PC-9 (cell line): ENCODE measurements at regions of chr3 and their contacts with region 1.

Region 1: GRCh38 chr3:111080413-111080812 is 8.8 kb downstream of the NECTIN3 start:
- DNase-seq: no peak
- H3K4me3 ChIP-seq: no peak overlapping the region
- H3K27ac ChIP-seq: no peak overlapping the region
- H3K4me1 ChIP-seq: no peaks in the 10 kb centered on the region
- H3K27me3 ChIP-seq: no peaks in the 10 kb centered on the region
- CTCF ChIP-seq: peak; percentile 78

Region 2: GRCh38 chr3:109532257-109533216 is 1547.9 kb before region 1 on chr3:
- CTCF ChIA-PET with region 1: interaction called, 5 read pairs
- POLR2A ChIA-PET with region 1: no interaction called
- intact Hi-C with region 1: loop called (anchors 1 kb)
- DNase-seq: peak; percentile 63 to 71
- H3K4me3 ChIP-seq: no peak overlapping the region
- H3K27ac ChIP-seq: no peak overlapping the region
- H3K4me1 ChIP-seq: no peaks in the 10 kb centered on the region
- H3K27me3 ChIP-seq: no peaks in the 10 kb centered on the region
- CTCF ChIP-seq: peak; percentile 75

Region 3: DNA sequence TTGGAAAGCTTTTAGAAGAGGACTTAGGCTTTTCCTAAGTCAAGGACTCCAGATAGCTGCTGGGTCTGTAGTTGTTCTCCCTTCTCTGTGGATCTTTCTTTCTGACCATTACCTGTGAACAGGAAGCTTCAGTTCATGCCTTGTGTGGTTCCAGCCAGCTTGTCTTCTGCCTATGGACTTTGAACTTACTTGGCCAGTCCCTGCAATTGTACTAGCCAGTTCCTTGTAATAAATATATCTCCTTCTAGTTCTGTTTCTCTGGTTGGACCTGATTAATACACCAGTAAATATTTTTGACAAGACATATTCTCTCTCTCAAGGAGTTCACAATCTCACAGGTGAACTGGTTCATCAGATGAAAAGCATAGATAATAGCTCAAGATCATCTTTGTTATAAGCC is 1401.8 kb before region 1 on chr3:
- CTCF ChIA-PET with region 1: interaction called, 10 read pairs
- POLR2A ChIA-PET with region 1: no interaction called
- intact Hi-C with region 1: no loop called
- DNase-seq: no peak
- H3K4me3 ChIP-seq: no peak overlapping the region
- H3K27ac ChIP-seq: no peak overlapping the region
- H3K4me1 ChIP-seq: no peaks in the 10 kb centered on the region
- H3K27me3 ChIP-seq: no peaks in the 10 kb centered on the region
- CTCF ChIP-seq: no peak

Region 4: GRCh38 chr3:109731620-109732473 is 1348.6 kb before region 1 on chr3:
- CTCF ChIA-PET with region 1: no interaction called
- POLR2A ChIA-PET with region 1: no interaction called
- intact Hi-C with region 1: loop called (anchors 2 kb)
- DNase-seq: peak in 1 of 2 experiments; percentile 32
- H3K4me3 ChIP-seq: no peak overlapping the region
- H3K27ac ChIP-seq: no peak overlapping the region
- H3K4me1 ChIP-seq: no peaks in the 10 kb centered on the region
- H3K27me3 ChIP-seq: no peaks in the 10 kb centered on the region
- CTCF ChIP-seq: peak; percentile 100

Region 5: GRCh38 chr3:110495201-110495927 is 585.0 kb before region 1 on chr3:
- CTCF ChIA-PET with region 1: no interaction called
- POLR2A ChIA-PET with region 1: no interaction called
- intact Hi-C with region 1: loop called (anchors 1 kb)
- DNase-seq: peak in 1 of 2 experiments; percentile 60
- H3K4me3 ChIP-seq: no peak overlapping the region
- H3K27ac ChIP-seq: no peak overlapping the region
- H3K4me1 ChIP-seq: no peaks in the 10 kb centered on the region
- H3K27me3 ChIP-seq: no peaks in the 10 kb centered on the region
- CTCF ChIP-seq: no peak

Region 6: DNA sequence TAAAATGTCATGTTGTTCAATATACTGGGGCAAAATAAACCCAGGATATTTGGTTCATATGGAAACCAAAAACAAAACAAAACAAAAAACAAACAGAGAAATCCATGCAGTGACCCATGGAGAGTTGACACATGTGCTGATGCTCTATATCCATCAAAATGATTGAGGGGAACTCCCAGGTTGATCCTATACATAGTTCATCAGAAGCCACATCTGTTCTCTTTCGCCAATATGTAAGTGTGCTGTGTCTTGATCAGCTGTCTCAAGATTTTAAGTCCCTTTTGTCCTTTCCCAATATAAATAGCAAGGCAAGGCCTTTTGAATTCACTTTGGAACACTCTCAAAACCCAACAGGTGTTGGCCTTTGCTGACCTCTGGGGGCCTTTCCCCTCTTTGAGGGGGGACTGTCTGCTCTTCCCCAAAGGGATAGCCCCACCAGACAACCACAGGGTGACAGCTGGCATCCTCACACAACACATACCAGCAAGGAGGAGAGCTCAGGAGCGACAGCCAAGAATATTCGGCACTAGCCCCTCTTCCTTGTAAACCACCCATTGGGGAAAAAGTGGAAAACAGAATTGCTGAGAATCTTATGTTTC is 252.2 kb after region 1 on chr3:
- CTCF ChIA-PET with region 1: interaction called, 15 read pairs
- POLR2A ChIA-PET with region 1: no interaction called
- intact Hi-C with region 1: no loop called
- DNase-seq: no peak
- H3K4me3 ChIP-seq: no peak overlapping the region
- H3K27ac ChIP-seq: no peak overlapping the region
- H3K4me1 ChIP-seq: no peaks in the 10 kb centered on the region
- H3K27me3 ChIP-seq: no peaks in the 10 kb centered on the region
- CTCF ChIP-seq: no peak

Region 7: DNA sequence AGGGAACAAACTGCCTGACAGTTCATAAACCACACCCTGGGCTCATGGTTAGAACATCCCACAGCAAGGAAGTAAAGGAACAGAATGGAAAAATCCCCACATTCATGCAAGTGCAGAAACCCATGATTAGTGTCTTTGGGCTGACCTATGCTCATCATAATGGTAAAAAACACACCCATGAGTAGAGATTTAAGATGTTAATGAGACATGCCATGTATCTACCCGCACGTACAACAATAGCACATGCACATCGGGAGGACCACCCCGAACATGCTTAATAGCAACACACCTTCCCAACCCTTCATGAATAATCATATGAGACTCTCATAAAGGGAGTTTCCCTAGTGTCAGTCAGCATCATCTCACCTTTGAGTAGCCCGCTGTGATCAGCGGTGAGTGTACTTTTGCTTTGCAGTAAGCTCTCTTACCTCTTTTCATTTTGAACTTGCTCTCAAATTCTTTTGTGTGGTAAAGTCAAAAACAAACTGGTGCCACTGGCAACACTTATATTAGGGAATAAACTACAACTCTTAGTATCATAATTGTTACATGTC is 491.6 kb after region 1 on chr3:
- CTCF ChIA-PET with region 1: no interaction called
- POLR2A ChIA-PET with region 1: no interaction called
- intact Hi-C with region 1: no loop called
- DNase-seq: no peak
- H3K4me3 ChIP-seq: no peak overlapping the region
- H3K27ac ChIP-seq: no peak overlapping the region
- H3K4me1 ChIP-seq: no peaks in the 10 kb centered on the region
- H3K27me3 ChIP-seq: no peaks in the 10 kb centered on the region
- CTCF ChIP-seq: no peak